H1 (cell line): ENCODE measurements at regions of chr3 and their contacts with region 1.

Region 1: DNA sequence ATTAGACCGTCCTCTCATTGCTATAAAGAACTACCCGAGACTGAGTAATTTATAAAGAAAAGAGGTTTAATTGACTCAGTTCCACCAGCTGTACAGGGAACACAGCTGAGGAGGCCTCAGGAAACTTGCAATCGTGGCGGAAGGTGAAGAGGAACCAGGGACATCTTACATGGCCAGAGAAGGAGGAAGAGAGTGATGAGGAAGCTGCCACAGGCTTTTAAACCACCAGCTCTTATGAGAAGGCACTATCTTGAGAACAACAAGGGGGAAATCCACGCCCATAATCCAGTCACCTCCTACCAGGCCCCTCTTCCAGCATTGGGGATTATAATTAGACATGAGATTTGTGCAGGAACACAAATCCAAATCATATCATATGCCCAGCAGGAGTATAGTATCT is 138.5 kb downstream of the ALCAM start:
- DNase-seq: no peak
- H3K4me3 ChIP-seq: no peak overlapping the region
- H3K27ac ChIP-seq: no peak overlapping the region
- H3K4me1 ChIP-seq: peaks cover 0 to 4% (median 2%) of the 10 kb centered on the region in 4 experiments; a peak in 2 of 7 replicates
- H3K27me3 ChIP-seq: no peaks in the 10 kb centered on the region
- CTCF ChIP-seq: no peak
- EP300 ChIP-seq: no peak
- POLR2A ChIP-seq: no peak
- RAD21 ChIP-seq: no peak

Region 2: DNA sequence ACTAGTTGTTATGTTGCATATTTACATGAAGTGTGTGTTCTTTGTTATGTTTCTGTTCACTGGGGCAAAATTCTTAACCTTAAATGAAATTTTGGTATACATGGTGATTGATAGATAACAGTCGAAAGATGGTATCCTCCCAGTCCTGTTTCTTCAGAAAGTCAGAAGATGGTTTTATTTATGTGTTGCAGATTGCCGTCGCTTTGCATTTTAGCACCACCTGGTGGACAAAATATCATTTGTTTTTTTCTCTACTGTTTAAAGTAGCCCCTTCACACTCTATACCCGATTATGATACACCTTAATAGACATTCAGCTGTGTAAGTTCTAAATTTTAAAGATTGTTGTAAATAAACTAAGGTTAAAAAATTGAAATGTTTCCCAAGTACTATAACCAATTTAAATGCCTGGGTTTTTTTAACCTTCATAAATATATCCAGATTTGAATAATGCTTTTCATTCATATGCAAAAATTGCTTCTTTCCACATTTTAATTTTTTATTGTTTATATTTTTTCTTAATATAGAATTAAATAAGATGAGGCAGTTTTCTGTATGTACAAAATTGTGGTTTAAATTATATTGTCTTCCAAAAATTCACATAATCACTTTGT is 13.7 kb after region 1 on chr3:
- CTCF ChIA-PET with region 1: interaction called, 42 read pairs
- POLR2A ChIA-PET with region 1: no interaction called
- DNase-seq: no peak
- H3K4me3 ChIP-seq: no peak overlapping the region
- H3K27ac ChIP-seq: no peak overlapping the region
- H3K4me1 ChIP-seq: peaks cover 0 to 5% (median 0%) of the 10 kb centered on the region in 4 experiments; a peak in 1 of 7 replicates
- H3K27me3 ChIP-seq: no peaks in the 10 kb centered on the region
- CTCF ChIP-seq: peak in 2 of 3 experiments; percentile 29 to 41; a peak in 2 of 4 replicates
- EP300 ChIP-seq: no peak
- POLR2A ChIP-seq: no peak
- RAD21 ChIP-seq: peak; percentile 82 to 83

Region 3: GRCh38 chr3:105656651-105657504 is 151.7 kb after region 1 on chr3:
- CTCF ChIA-PET with region 1: no interaction called
- POLR2A ChIA-PET with region 1: no interaction called
- DNase-seq: no peak
- H3K4me3 ChIP-seq: no peak overlapping the region
- H3K27ac ChIP-seq: no peak overlapping the region
- H3K4me1 ChIP-seq: no peaks in the 10 kb centered on the region
- H3K27me3 ChIP-seq: no peaks in the 10 kb centered on the region
- CTCF ChIP-seq: no peak
- EP300 ChIP-seq: no peak
- POLR2A ChIP-seq: no peak
- RAD21 ChIP-seq: no peak